ENCODE measurements at regions of chr4 and their contacts with region 1.

Region 1: GRCh38 chr4:85968945-85969819 is 390.7 kb downstream of the MAPK10 start:
- DNase-seq: no peak
- H3K4me3 Mint-ChIP-seq: no peak overlapping the region
- H3K27ac Mint-ChIP-seq: no peak overlapping the region
- H3K4me1 Mint-ChIP-seq: no peaks in the 10 kb centered on the region
- H3K27me3 Mint-ChIP-seq: no peaks in the 10 kb centered on the region

Region 2: DNA sequence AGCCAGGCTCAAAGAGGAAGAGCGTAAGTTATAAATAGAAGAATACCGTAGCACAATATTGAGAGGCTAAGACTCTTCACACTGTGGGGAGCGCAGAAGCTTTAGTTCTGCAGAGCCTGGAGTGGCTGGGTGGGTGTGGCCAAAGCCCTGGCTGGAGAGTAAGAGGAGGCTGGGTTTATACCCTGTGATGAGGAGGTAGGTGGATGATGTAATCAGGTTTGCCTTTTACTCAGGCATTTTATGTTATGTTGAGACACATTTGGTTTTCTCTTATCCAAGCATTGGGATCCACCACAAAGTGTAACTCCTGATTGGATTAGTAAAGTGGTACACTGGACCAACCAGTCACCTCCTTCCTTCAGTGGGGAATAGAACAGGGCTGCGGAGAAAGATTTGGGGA is 1372.4 kb before region 1 on chr4:
- CTCF ChIA-PET with region 1: no interaction called
- intact Hi-C with region 1: no loop called
- DNase-seq: peak; percentile 43
- H3K4me3 Mint-ChIP-seq: no peak overlapping the region
- H3K27ac Mint-ChIP-seq: no peak overlapping the region
- H3K4me1 Mint-ChIP-seq: peaks cover 7% of the 10 kb centered on the region
- H3K27me3 Mint-ChIP-seq: peaks cover 1% of the 10 kb centered on the region

Region 3: DNA sequence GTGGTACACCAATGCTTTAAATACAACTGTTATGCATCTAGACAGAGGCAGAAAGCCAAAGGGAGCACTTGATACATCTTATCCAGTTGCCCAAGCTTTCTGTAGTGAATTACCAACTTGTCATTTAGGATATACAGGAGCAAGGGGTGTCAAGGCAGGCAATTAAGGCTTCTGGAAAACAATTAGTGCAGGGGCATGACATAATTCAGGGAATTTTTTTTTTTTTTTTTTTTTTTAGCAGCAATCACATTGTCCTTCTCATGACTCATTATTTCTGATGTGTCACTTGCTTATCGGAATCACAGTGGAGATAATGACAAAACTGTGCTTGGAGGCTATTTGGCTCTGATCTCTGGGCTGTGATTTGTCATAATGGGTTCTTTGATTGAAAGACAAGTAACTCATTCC is 234.8 kb before region 1 on chr4:
- CTCF ChIA-PET with region 1: no interaction called
- intact Hi-C with region 1: no loop called
- DNase-seq: no peak
- H3K4me3 Mint-ChIP-seq: no peak overlapping the region
- H3K27ac Mint-ChIP-seq: no peak overlapping the region
- H3K4me1 Mint-ChIP-seq: no peaks in the 10 kb centered on the region
- H3K27me3 Mint-ChIP-seq: no peaks in the 10 kb centered on the region

Region 4: DNA sequence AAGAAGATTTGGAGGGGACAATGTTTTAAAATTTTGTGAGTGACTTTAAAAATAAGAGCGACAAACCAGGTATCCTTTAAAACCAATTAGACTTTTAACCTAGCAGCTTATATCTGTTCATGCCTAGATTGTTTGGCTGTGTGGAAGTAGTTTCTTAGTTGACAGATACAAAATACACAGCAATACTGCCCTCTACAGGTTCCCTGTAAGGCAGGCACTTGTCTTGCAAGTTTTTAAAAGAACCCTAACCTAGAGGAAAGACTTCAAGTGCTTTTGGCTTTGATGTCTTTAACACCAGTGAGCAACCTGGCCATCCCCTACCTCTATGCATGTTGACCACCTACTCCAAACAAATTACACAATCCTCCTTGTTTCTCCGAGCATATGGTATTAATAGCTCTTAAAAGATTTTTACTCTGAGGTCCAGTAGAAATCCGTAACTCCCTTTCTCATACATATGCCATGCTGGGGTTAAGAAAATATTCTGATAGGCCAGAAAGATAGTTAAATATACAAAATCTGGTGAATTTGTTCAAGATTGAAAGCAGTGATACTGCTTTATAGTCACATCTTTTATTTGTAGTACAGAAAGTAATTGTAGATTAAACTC is 221.2 kb before region 1 on chr4:
- CTCF ChIA-PET with region 1: no interaction called
- intact Hi-C with region 1: loop called (anchors 5 kb)
- DNase-seq: peak; percentile 25
- H3K4me3 Mint-ChIP-seq: no peak overlapping the region
- H3K27ac Mint-ChIP-seq: no peak overlapping the region
- H3K4me1 Mint-ChIP-seq: no peaks in the 10 kb centered on the region
- H3K27me3 Mint-ChIP-seq: peaks cover 3% of the 10 kb centered on the region